BJ (cell line): ENCODE measurements at regions of chr1 and their contacts with region 1.

Region 1: DNA sequence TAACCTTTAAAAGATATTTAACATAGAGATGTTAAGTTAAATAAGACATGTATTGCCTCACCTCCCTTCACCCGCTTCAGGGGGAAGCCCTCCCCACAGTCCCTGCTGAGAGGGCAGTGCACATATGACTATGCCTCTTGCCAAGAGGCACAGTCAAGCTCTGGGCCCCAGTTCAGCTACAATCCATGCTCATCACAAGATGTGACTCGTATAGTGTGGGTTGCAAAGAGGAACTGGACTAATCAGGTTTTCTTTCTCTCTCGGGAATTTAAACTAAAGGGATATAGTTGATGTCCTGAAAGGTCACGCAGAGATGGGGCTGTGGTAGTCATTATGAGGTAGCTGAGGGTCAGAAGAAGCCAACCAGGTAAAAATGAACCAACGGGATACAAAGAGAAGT is 35.6 kb downstream of the LYST start:
- DNase-seq: no peak
- H3K4me3 ChIP-seq: no peak overlapping the region
- H3K27me3 ChIP-seq: no peaks in the 10 kb centered on the region
- CTCF ChIP-seq: no peak

Region 2: GRCh38 chr1:235843461-235843961 is 12.4 kb after region 1 on chr1:
- CTCF ChIA-PET with region 1: interaction called, 17 read pairs
- POLR2A ChIA-PET with region 1: interaction called, 9 read pairs
- DNase-seq: no peak
- H3K4me3 ChIP-seq: no peak overlapping the region
- H3K27me3 ChIP-seq: no peaks in the 10 kb centered on the region
- CTCF ChIP-seq: peak; percentile 72